ENCODE measurements at regions of chr6 and their contacts with region 1.

Region 1: GRCh38 chr6:158718461-158719046 is 68.7 kb downstream of the SYTL3 start:
- DNase-seq: no peak
- ATAC-seq: peak; percentile 30 to 62 (median 48)
- H3K4me3 ChIP-seq: no peak overlapping the region
- H3K27ac ChIP-seq: peak overlapping the region in 1 of 12 donors; percentile 89
- H3K4me1 ChIP-seq: peaks cover 0 to 66% (median 0%) of the 10 kb centered on the region in 12 donors
- H3K27me3 ChIP-seq: no peaks in the 10 kb centered on the region
- CTCF ChIP-seq: peak; percentile 29 to 65 (median 52)
- POLR2A ChIP-seq: no peak

Region 2: DNA sequence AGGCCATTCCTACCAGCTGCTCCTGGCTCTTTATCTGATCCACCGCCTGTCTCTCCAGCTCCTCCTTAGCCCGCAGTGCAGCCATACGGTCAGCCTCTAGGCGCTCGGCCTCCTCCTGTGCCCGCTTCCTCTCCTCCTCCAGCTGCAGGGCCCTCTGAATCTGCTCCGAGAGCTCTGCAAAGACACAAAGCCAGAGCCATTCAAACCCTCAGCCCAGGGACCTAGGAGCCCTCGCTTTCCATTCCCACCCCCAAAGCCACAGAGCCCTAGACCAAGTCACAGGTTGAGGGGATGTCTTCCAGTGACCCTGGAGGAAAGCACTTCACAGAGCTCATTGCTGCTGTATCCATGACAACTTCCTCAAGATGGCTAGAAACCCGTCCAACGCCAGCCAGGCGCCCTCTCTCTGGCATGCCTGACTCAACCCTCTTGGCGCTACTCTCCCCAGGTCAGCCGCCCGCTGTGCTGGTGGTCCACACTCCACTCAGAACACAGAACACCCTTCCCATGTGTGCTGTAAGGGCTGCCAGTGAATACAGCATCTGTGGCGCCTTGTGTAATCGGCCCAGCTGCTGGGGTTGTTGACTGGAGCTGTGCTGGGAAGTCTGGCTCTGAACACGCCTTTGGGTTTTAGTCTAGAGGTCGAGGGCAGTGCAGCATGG is 51.3 kb after region 1 on chr6:
- intact Hi-C with region 1: loop called in 1 of 10 experiments (anchors 10 kb)
- DNase-seq: peak in 4 of 5 donors; percentile 40 to 81 (median 60)
- ATAC-seq: peak; percentile 36 to 68 (median 59)
- H3K4me3 ChIP-seq: no peak overlapping the region
- H3K27ac ChIP-seq: peak overlapping the region; percentile 6 to 74 (median 62)
- H3K4me1 ChIP-seq: peaks cover 0 to 59% (median 30%) of the 10 kb centered on the region in 12 donors
- H3K27me3 ChIP-seq: no peaks in the 10 kb centered on the region
- CTCF ChIP-seq: no peak
- POLR2A ChIP-seq: no peak

Region 3: GRCh38 chr6:158803733-158804143 is 85.2 kb after region 1 on chr6:
- intact Hi-C with region 1: no loop called
- DNase-seq: no peak
- ATAC-seq: no peak
- H3K4me3 ChIP-seq: peak overlapping the region in 4 of 12 donors; percentile 9 to 30 (median 18)
- H3K27ac ChIP-seq: peak overlapping the region in 11 of 12 donors; percentile 1 to 81 (median 42)
- H3K4me1 ChIP-seq: peaks cover 3 to 83% (median 51%) of the 10 kb centered on the region in 12 donors
- H3K27me3 ChIP-seq: no peaks in the 10 kb centered on the region
- CTCF ChIP-seq: no peak
- POLR2A ChIP-seq: no peak

Region 4: DNA sequence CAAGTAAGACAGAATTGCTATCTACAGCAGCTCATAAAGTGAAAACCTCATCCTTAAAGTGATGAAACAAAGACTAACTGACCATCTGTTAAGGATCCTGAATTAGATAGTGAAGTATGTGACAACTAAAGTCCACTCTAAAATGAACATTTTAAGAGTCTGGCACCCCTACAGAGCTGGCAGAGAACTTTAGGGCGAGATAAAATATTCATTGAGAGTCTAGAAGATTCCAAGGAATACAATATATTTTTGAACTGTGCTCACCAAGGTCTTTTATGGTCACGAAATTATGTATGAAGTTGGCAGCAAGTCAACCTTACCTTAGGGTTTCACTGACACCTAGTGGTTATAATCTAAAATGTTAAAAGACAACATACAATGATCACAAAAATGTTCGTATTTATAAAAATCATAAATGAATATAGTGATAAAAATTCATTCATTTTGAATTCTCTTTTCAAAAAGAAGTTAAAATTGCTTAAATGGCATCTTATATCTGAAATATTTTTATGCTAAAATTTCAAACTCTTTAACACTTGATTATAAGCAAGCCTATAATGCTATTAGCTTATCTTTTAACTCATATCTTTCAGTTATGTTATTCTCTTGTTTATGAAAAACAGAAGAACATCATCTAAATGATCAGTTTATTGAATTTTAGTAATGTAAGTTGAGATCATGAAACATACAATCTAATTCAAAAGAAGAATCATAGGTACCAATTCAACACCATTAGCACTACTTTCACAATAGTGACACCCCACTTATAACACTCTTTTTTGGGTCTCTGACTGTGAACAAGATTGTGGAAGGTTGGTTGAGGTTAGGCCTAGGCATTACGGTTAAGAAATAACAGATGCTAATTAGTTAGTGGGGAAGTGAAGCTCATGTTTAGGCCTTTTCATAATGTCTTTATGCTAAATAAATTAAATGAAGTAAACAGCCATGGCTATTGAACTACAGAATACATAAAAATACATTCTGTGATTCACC is 254.0 kb after region 1 on chr6:
- intact Hi-C with region 1: loop called in 1 of 10 experiments (anchors 5 kb)
- DNase-seq: no peak
- ATAC-seq: peak in 1 of 4 donors; percentile 60
- H3K4me3 ChIP-seq: no peak overlapping the region
- H3K27ac ChIP-seq: no peak overlapping the region
- H3K4me1 ChIP-seq: peaks cover 0 to 5% (median 0%) of the 10 kb centered on the region in 12 donors
- H3K27me3 ChIP-seq: no peaks in the 10 kb centered on the region
- CTCF ChIP-seq: peak; percentile 34 to 73 (median 57)
- POLR2A ChIP-seq: no peak

Region 5: DNA sequence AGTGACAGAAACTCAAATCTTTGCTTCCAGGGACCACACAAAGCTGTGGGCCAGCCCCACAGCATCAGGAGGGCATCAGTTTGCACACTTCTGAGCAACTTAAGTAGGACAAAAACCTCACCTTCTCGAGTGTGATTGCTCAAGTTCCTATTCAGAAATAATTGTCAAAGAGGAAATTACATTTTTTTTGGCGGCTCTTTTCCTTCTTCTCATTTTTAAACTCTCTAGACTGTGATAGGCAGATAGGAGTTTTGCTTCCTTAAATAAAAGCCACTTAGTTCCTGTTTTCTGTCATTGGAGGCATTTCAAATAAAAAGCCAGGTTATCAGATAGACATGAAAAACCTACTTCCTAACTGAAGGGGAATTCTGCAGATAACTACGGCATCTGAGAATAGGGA is 337.4 kb after region 1 on chr6:
- intact Hi-C with region 1: no loop called
- DNase-seq: no peak
- ATAC-seq: peak in 2 of 4 donors; percentile 16 to 30
- H3K4me3 ChIP-seq: peak overlapping the region in 1 of 12 donors; percentile 12
- H3K27ac ChIP-seq: peak overlapping the region in 2 of 12 donors; percentile 13 to 76
- H3K4me1 ChIP-seq: peaks cover 0 to 39% (median 0%) of the 10 kb centered on the region in 12 donors
- H3K27me3 ChIP-seq: peaks cover 0 to 18% (median 0%) of the 10 kb centered on the region in 9 donors
- CTCF ChIP-seq: no peak
- POLR2A ChIP-seq: no peak

Region 6: GRCh38 chr6:159104163-159104925 is 385.8 kb after region 1 on chr6:
- intact Hi-C with region 1: loop called in 1 of 10 experiments (anchors 10 kb)
- DNase-seq: peak; percentile 50 to 85 (median 62)
- ATAC-seq: peak; percentile 67 to 94 (median 90)
- H3K4me3 ChIP-seq: no peak overlapping the region
- H3K27ac ChIP-seq: no peak overlapping the region
- H3K4me1 ChIP-seq: peaks cover 0 to 47% (median 5%) of the 10 kb centered on the region in 12 donors
- H3K27me3 ChIP-seq: peaks cover 0 to 9% (median 0%) of the 10 kb centered on the region in 9 donors
- CTCF ChIP-seq: peak; percentile 63 to 83 (median 76)
- POLR2A ChIP-seq: no peak

Region 7: DNA sequence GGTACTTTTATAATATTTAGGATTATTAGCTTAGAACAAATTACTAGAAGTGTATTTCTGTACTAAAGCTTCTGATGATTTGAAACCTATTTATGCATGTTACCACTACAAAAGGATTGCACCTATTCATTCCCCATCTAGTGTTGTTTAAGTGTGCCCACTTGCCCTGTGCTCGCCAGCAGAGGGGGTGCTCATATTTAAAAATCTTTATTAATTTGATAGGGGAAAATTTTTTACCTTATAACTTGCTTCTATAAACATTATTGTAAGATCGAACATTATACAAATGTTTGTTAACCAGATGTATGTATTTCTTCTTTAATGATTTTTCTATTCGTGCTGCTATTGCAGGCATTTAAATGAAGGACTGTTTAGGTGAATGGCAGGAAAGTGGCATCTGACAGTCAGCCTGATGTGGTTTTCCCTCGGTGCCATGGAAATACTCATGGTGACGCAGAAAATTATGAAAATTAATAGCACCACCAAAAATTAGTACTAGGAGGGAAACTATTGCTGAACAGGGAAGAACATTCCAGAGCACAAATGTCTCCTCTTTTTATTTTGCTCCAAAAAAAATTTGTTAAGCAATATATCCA is 406.6 kb after region 1 on chr6:
- intact Hi-C with region 1: loop called in 2 of 10 experiments (anchors 10 kb)
- DNase-seq: no peak
- ATAC-seq: no peak
- H3K4me3 ChIP-seq: no peak overlapping the region
- H3K27ac ChIP-seq: peak overlapping the region in 10 of 12 donors; percentile 53 to 96 (median 86)
- H3K4me1 ChIP-seq: peaks cover 0 to 43% (median 12%) of the 10 kb centered on the region in 12 donors
- H3K27me3 ChIP-seq: no peaks in the 10 kb centered on the region
- CTCF ChIP-seq: peak in 8 of 12 donors; percentile 15 to 43 (median 22)
- POLR2A ChIP-seq: no peak

Region 8: GRCh38 chr6:159134701-159135364 is 416.3 kb after region 1 on chr6:
- intact Hi-C with region 1: loop called in 1 of 10 experiments (anchors 10 kb)
- DNase-seq: peak in 4 of 5 donors; percentile 45 to 62 (median 56)
- ATAC-seq: peak; percentile 41 to 77 (median 74)
- H3K4me3 ChIP-seq: no peak overlapping the region
- H3K27ac ChIP-seq: no peak overlapping the region
- H3K4me1 ChIP-seq: peaks cover 0 to 4% (median 0%) of the 10 kb centered on the region in 12 donors
- H3K27me3 ChIP-seq: peaks cover 0 to 15% (median 0%) of the 10 kb centered on the region in 9 donors
- CTCF ChIP-seq: peak; percentile 79 to 97 (median 86)
- POLR2A ChIP-seq: no peak